Activated naive CD8-positive, alpha-beta T cell treated with anti-CD3 and anti-CD28 coated beads, Interleukin-2, amount 10 ng/mL, durations not matched to agents 7 days and 5 days (primary cell): ENCODE measurements at regions of chr11 and their contacts with region 1.

Region 1: DNA sequence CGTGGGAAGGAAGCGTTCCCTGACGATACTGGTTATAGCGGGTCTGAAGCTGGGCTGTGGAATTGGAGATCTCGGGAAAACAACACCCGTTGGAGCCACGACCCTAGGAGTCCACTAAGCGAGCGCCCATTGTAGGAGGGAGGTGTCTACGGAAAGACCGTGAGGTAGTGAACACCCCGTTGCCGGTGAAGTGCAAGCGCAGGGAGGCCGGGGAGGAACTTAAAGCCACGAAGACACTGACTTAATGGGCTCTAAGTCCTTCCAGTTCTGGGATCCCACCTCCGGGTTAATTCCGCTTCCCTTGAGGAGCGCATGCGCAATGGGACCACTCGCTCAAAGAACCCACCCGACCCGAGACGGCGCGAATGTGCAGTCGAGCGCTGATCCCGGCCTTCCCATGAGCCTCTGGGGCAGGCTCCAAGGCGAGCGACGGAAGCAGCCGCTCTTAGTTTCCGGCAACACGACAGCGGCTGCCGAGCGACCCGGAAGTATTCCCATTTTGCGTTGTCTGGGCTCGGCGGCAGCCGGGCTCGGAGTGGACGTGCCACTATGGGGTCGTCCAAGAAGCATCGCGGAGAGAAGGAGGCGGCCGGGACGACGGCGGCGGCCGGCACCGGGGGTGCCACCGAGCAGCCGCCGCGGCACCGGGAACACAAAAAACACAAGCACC is at the start of gene SART1:
- DNase-seq: peak; percentile 91
- ATAC-seq: peak; percentile 91
- H3K4me3 Mint-ChIP-seq: peak within 1 kb of the TSS; percentile 94
- H3K27ac Mint-ChIP-seq: peak within 1 kb of the TSS; percentile 97
- H3K4me1 Mint-ChIP-seq: peaks cover 38% of the 10 kb centered on the region
- H3K27me3 Mint-ChIP-seq: no peaks in the 10 kb centered on the region
- total RNA-seq, gene SART1: 79.3 to 83.5 TPM

Region 2: GRCh38 chr11:65873318-65874156 is 87.8 kb before region 1 on chr11:
- POLR2A ChIA-PET with region 1: no interaction called
- DNase-seq: peak; percentile 100
- ATAC-seq: peak; percentile 85
- H3K4me3 Mint-ChIP-seq: peak overlapping the region; percentile 77
- H3K27ac Mint-ChIP-seq: peak overlapping the region; percentile 77
- H3K4me1 Mint-ChIP-seq: peaks cover 33% of the 10 kb centered on the region
- H3K27me3 Mint-ChIP-seq: no peaks in the 10 kb centered on the region

Region 3: DNA sequence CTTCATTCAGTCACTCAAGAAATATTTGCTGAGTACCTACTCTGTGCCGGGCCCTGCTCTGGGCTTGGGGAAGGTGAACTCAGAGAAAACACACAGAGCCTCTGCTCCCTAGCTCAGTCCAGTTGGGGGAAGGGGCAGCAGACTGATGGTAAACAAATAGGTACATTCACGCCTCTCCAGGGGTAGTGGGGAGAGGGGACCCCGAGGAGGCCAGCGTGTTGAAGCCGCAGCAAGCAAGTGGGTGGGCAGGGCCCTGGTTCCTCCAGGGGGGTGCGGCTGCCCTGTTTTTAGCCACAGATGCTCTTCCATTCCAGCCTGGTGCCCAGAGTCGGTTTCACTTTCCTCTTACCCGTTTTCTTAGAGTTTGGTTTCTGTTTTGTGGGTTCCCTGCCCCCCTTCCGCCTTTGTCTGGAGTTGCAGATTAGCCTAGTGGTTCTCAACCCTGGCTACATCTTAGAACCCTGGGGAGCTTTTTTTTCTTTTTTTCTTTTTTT is 33.4 kb before region 1 on chr11:
- POLR2A ChIA-PET with region 1: interaction called, 13 read pairs
- DNase-seq: peak; percentile 76
- ATAC-seq: peak; percentile 85
- H3K4me3 Mint-ChIP-seq: peak overlapping the region; percentile 81
- H3K27ac Mint-ChIP-seq: peak overlapping the region; percentile 93
- H3K4me1 Mint-ChIP-seq: peaks cover 51% of the 10 kb centered on the region
- H3K27me3 Mint-ChIP-seq: no peaks in the 10 kb centered on the region

Region 4: DNA sequence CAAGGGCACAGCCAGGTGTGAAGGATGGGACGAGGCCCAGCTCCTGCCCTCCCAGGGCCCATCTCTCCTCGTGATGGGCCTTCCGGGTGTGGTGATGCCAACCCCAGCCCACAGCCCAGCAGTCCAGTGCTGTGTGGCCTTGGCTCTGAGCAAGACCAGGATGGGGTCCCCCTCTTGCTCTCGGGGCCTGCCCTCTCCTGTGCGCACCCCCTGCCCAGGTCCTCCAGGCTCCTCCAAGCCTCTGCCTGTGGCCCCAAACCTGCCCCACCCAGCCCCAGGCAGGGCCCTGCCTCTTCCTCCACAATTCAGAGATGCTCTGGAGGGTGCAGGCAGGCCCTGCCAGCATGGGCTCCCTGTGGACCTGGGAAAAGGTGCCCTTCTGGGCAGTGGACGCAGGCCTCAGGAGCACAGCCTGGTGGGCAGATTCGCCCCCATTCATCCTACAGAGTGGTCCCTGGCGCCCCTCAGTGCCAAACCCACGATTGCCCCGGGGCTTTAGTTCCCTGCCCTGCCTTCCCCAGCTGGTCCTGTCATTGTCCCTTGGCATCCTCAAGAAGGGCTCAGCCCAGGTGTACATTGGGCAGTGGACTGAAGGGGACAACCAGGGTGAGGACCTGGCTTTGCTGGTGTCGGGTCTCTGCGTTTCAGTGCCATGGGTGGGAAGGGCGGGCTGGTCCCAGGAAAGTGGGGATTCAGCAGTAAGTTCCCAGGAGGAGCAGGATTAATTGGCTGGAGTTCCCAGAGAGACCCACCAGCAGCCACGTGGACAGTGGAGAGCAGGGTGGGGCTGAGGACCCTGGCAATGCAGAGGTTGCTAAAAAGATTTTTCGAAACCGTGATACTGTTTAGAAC is 20.8 kb after region 1 on chr11:
- POLR2A ChIA-PET with region 1: no interaction called
- DNase-seq: no peak
- ATAC-seq: no peak
- H3K4me3 Mint-ChIP-seq: no peak overlapping the region
- H3K27ac Mint-ChIP-seq: no peak overlapping the region
- H3K4me1 Mint-ChIP-seq: no peaks in the 10 kb centered on the region
- H3K27me3 Mint-ChIP-seq: no peaks in the 10 kb centered on the region